ENCODE measurements at regions of chr14 and their contacts with region 1.

Region 1: DNA sequence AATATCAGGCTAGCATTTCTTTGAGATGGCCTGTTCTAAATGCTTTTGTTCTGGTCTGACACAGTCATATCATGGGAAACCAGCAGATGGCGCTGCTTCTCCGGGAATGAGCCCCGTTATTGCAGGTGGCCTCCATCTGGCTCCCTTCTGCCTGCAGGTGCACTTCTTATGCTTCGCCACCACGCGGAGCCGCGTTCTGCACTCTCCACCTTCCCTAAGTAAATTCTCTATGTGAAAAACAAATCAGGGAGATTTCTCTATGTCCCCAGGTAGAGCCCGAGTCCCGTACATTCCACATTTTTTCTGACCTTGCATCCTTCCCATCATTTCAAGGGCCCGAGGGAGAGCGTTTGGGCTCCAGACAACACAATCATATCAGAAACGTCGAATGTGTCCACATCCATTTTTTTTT is 26.2 kb downstream of the GLRX5 start:
- DNase-seq: peak; percentile 53 to 85 (median 80)
- ATAC-seq: peak; percentile 94
- H3K4me3 ChIP-seq: no peak overlapping the region
- H3K4me3 Mint-ChIP-seq: no peak overlapping the region
- H3K27ac ChIP-seq: no peak overlapping the region
- H3K27ac Mint-ChIP-seq: no peak overlapping the region
- H3K4me1 ChIP-seq: no peaks in the 10 kb centered on the region
- H3K4me1 Mint-ChIP-seq: peaks cover 0 to 5% (median 3%) of the 10 kb centered on the region in 7 donors
- H3K27me3 ChIP-seq: no peaks in the 10 kb centered on the region
- H3K27me3 Mint-ChIP-seq: peaks cover 6 to 14% (median 7%) of the 10 kb centered on the region in 5 donors

Region 2: DNA sequence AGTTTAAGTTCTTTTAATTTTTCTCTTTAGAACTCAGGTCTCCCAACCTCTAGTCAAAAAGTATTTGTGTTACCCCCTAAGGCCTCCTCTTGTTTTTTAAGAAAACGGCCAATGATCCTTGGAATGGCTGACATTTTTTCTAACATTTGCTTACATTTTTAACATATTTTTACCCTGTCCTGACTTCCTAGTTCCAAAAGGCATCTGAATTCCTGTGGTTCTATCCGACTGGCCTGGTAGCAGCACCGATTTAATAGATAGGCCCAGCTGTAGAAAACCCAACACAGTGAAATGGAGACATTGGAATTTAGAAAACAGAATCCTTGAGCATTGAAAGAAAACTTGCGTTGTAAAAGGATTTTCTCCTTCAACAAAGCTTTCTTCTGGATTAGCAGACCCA is 656.4 kb before region 1 on chr14:
- CTCF ChIA-PET with region 1: no interaction called
- POLR2A ChIA-PET with region 1: no interaction called
- intact Hi-C with region 1: no loop called
- DNase-seq: no peak
- ATAC-seq: no peak
- H3K4me3 ChIP-seq: no peak overlapping the region
- H3K4me3 Mint-ChIP-seq: no peak overlapping the region
- H3K27ac ChIP-seq: no peak overlapping the region
- H3K27ac Mint-ChIP-seq: no peak overlapping the region
- H3K4me1 ChIP-seq: no peaks in the 10 kb centered on the region
- H3K4me1 Mint-ChIP-seq: no peaks in the 10 kb centered on the region
- H3K27me3 ChIP-seq: no peaks in the 10 kb centered on the region
- H3K27me3 Mint-ChIP-seq: peaks cover 2 to 27% (median 8%) of the 10 kb centered on the region in 5 donors

Region 3: DNA sequence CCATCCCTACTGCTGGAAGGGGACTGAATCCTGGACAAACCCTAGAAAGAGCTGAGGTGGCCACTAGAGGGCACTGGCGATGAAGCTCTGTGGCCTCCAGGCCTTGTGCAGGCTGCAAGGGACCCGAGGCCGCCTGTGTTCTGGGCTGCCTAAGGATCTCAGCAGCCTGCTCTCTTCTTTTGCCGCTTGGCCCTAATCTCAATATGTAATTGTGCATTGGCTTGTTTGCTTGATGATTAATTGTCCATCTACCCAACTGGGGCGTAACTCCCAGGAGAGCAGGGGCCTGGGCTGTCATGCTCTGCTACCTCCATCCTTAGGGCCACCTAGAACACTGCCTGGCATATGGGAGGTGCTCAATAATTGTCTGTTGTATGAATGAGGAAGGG is 118.4 kb before region 1 on chr14:
- CTCF ChIA-PET with region 1: interaction called, 3 read pairs
- POLR2A ChIA-PET with region 1: no interaction called
- intact Hi-C with region 1: loop called in 1 of 2 experiments (anchors 1 kb)
- DNase-seq: peak; percentile 51 to 76 (median 68)
- ATAC-seq: peak; percentile 94
- H3K4me3 ChIP-seq: no peak overlapping the region
- H3K4me3 Mint-ChIP-seq: no peak overlapping the region
- H3K27ac ChIP-seq: no peak overlapping the region
- H3K27ac Mint-ChIP-seq: peak overlapping the region; percentile 3 to 77 (median 57)
- H3K4me1 ChIP-seq: no peaks in the 10 kb centered on the region
- H3K4me1 Mint-ChIP-seq: peaks cover 4 to 15% (median 5%) of the 10 kb centered on the region in 7 donors
- H3K27me3 ChIP-seq: no peaks in the 10 kb centered on the region
- H3K27me3 Mint-ChIP-seq: no peaks in the 10 kb centered on the region

Region 4: DNA sequence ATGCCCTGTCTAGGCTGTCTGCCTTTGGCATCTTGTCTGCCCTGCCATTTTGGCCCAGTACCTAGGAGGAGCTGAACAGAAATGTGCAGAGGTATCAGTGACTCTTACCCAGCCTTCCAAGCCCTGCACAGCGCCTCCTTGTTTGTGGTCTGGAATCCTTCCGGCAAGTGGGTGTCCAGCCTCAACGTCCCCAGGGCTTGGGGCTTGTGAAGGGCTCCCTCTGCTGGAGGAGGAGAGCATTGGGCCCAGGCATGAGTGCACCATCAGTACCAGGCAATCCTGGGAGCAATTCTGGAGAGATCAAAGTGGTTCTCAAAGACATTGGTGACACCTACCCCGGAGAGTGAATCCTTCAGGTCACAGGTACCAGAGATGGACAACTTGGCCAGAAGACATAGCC is 122.8 kb after region 1 on chr14:
- CTCF ChIA-PET with region 1: no interaction called
- POLR2A ChIA-PET with region 1: no interaction called
- intact Hi-C with region 1: loop called (anchors 1 kb)
- DNase-seq: peak in 4 of 9 donors; percentile 8 to 32 (median 18)
- ATAC-seq: peak; percentile 56
- H3K4me3 ChIP-seq: no peak overlapping the region
- H3K4me3 Mint-ChIP-seq: no peak overlapping the region
- H3K27ac ChIP-seq: no peak overlapping the region
- H3K27ac Mint-ChIP-seq: no peak overlapping the region
- H3K4me1 ChIP-seq: no peaks in the 10 kb centered on the region
- H3K4me1 Mint-ChIP-seq: no peaks in the 10 kb centered on the region
- H3K27me3 ChIP-seq: no peaks in the 10 kb centered on the region
- H3K27me3 Mint-ChIP-seq: peaks cover 4 to 34% (median 20%) of the 10 kb centered on the region in 5 donors

Region 5: GRCh38 chr14:95774265-95775160 is 213.5 kb after region 1 on chr14:
- CTCF ChIA-PET with region 1: interaction called, 15 read pairs
- POLR2A ChIA-PET with region 1: no interaction called
- intact Hi-C with region 1: no loop called
- DNase-seq: peak in 8 of 9 donors; percentile 4 to 46 (median 34)
- ATAC-seq: peak; percentile 65
- H3K4me3 ChIP-seq: no peak overlapping the region
- H3K4me3 Mint-ChIP-seq: no peak overlapping the region
- H3K27ac ChIP-seq: no peak overlapping the region
- H3K27ac Mint-ChIP-seq: peak overlapping the region in 1 of 9 donors; percentile 6
- H3K4me1 ChIP-seq: no peaks in the 10 kb centered on the region
- H3K4me1 Mint-ChIP-seq: peaks cover 0 to 6% (median 4%) of the 10 kb centered on the region in 7 donors
- H3K27me3 ChIP-seq: no peaks in the 10 kb centered on the region
- H3K27me3 Mint-ChIP-seq: peaks cover 5 to 10% (median 6%) of the 10 kb centered on the region in 5 donors

Measured in naive thymus-derived CD4-positive, alpha-beta T cell (primary cell).